ENCODE measurements at regions of chr9 and their contacts with region 1.

Region 1: DNA sequence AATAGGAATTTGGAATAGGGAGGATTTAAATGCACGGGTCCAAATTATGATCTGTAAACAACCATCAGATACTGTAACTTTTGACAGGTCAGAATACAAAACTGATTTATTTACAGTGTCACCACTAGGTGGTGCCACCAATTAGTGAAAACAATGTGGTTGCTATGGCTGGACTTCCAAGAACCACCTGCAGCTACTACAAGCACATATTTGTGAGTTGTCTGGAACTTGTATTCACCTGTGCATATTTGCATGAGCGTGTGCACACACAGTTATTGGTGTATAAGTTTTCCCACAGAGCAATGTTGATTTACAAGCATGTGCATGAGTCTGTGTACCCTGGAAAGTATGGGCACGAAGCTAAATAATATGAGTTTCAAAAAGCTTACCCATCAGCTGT is 3.0 kb upstream of the HRCT1 start:
- DNase-seq: peak; percentile 65
- ATAC-seq: no peak
- H3K4me3 ChIP-seq: no peak overlapping the region
- H3K27ac ChIP-seq: no peak overlapping the region
- H3K4me1 ChIP-seq: peaks cover 49% of the 10 kb centered on the region
- H3K27me3 ChIP-seq: peaks cover 0 to 11% of the 10 kb centered on the region in 2 experiments; a peak in 2 of 5 replicates
- CTCF ChIP-seq: peak; percentile 80
- EP300 ChIP-seq: no peak
- POLR2A ChIP-seq: no peak
- RAD21 ChIP-seq: peak; percentile 63

Region 2: DNA sequence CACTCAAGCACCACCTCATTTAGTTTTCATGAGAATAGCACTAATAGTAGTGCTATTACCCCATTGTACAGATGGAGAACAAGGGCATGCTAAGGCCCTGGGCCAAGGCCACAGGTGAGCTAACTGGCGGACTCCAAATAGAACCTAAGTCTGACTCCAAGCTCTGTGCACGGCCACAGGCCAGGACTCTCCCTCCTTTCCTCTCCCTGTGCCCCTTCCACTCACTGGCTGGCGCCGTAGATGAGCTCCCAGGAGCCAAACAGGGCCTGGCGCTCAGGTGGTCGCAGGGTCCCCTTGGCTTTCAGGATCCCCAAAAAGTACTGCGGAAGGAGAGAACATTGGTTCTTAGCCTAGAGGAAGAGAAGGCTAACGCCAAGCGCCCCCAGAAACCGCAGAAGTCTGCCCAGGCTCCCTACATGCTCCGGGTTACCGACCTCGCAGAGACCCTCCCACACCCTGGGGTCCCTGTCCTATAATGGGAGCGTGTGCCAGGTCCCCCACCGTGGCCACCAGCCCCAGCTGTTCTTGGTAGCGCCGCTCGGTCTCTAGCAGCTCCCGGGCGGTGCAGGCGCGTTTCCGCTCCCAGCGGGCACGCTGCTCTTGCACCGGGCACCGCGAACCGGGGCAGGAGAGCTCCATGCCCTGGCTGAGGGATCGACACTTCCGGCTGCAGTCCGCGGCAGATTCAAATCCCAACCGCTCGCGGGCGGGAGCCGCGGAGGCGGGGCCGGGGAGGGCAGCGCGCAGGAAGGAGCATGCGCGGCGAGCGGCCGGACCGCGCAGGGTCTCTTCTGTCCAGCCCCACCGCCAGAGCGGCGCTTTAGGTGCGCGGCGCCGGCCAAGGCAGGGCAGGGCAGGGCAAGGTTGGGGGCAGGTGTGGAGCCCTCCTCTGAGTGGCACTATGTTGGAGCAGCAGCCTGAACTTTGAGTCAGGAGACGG is 238.2 kb before region 1 on chr9 and contains the start of gene ARHGEF39:
- CTCF ChIA-PET with region 1: no interaction called
- POLR2A ChIA-PET with region 1: no interaction called
- in situ Hi-C with region 1: no loop called
- intact Hi-C with region 1: no loop called
- DNase-seq: peak; percentile 81
- ATAC-seq: peak; percentile 83
- H3K4me3 ChIP-seq: peak within 1 kb of the TSS; percentile 64 to 85 (median 78)
- H3K27ac ChIP-seq: peak within 1 kb of the TSS; percentile 73
- H3K4me1 ChIP-seq: peaks cover 80% of the 10 kb centered on the region
- H3K27me3 ChIP-seq: no peaks in the 10 kb centered on the region
- CTCF ChIP-seq: peak; percentile 84
- EP300 ChIP-seq: peak in 1 of 2 experiments; percentile 14; a peak in 1 of 4 replicates
- POLR2A ChIP-seq: peak in 1 of 2 experiments; percentile 75; a peak in 1 of 4 replicates
- RAD21 ChIP-seq: peak; percentile 79
- total RNA-seq, gene ARHGEF39: 10.4 and 11.2 TPM in 2 replicates

Region 3: GRCh38 chr9:35859310-35859989 is 43.6 kb before region 1 on chr9:
- CTCF ChIA-PET with region 1: no interaction called
- POLR2A ChIA-PET with region 1: no interaction called
- in situ Hi-C with region 1: no loop called
- intact Hi-C with region 1: no loop called
- DNase-seq: no peak
- ATAC-seq: no peak
- H3K4me3 ChIP-seq: no peak overlapping the region
- H3K27ac ChIP-seq: no peak overlapping the region
- H3K4me1 ChIP-seq: no peaks in the 10 kb centered on the region
- H3K27me3 ChIP-seq: peaks cover 1 to 28% of the 10 kb centered on the region in 2 experiments; a peak in 2 of 5 replicates
- CTCF ChIP-seq: 0 out of 2 replicates have a peak, but pooled peaks have one; percentile 8
- EP300 ChIP-seq: no peak
- POLR2A ChIP-seq: no peak
- RAD21 ChIP-seq: no peak

Region 4: GRCh38 chr9:35945341-35946018 is 42.4 kb after region 1 on chr9:
- CTCF ChIA-PET with region 1: interaction called, 21 read pairs
- POLR2A ChIA-PET with region 1: interaction called, 3 read pairs
- in situ Hi-C with region 1: no loop called
- intact Hi-C with region 1: loop called (anchors 1 kb)
- DNase-seq: peak; percentile 84
- ATAC-seq: peak; percentile 78
- H3K4me3 ChIP-seq: peak overlapping the region in 2 of 3 experiments; percentile 43 to 46; a peak in 2 of 6 replicates
- H3K27ac ChIP-seq: no peak overlapping the region
- H3K4me1 ChIP-seq: peaks cover 7% of the 10 kb centered on the region
- H3K27me3 ChIP-seq: peaks cover 0 to 8% of the 10 kb centered on the region in 2 experiments; a peak in 1 of 5 replicates
- CTCF ChIP-seq: peak; percentile 84
- EP300 ChIP-seq: no peak
- POLR2A ChIP-seq: no peak
- RAD21 ChIP-seq: peak; percentile 45; the same call in 1 of the 2 replicates

Measured in HepG2 (cell line).